Pancreas (tissue), 10 donors: ENCODE measurements at regions of chr17 and their contacts with region 1.

Region 1: GRCh38 chr17:82781894-82782274 is 30.0 kb downstream of the TBCD start:
- DNase-seq: peak; percentile 66 to 92 (median 83)
- ATAC-seq: peak; percentile 96 to 100 (median 98)
- H3K4me3 ChIP-seq: no peak overlapping the region
- H3K27ac ChIP-seq: no peak overlapping the region
- H3K4me1 ChIP-seq: no peaks in the 10 kb centered on the region
- H3K27me3 ChIP-seq: no peaks in the 10 kb centered on the region
- CTCF ChIP-seq: peak; percentile 86 to 96 (median 94)

Region 2: GRCh38 chr17:82917691-82918345 is 135.9 kb after region 1 on chr17:
- intact Hi-C with region 1: loop called in 1 of 3 experiments (anchors 10 kb)
- DNase-seq: peak in 1 of 6 donors; percentile 20
- ATAC-seq: peak in 1 of 4 donors; percentile 44
- H3K4me3 ChIP-seq: no peak overlapping the region
- H3K27ac ChIP-seq: no peak overlapping the region
- H3K4me1 ChIP-seq: peaks cover 0 to 8% (median 3%) of the 10 kb centered on the region in 3 donors
- H3K27me3 ChIP-seq: no peaks in the 10 kb centered on the region
- CTCF ChIP-seq: peak in 2 of 4 donors; percentile 19 to 21

Region 3: DNA sequence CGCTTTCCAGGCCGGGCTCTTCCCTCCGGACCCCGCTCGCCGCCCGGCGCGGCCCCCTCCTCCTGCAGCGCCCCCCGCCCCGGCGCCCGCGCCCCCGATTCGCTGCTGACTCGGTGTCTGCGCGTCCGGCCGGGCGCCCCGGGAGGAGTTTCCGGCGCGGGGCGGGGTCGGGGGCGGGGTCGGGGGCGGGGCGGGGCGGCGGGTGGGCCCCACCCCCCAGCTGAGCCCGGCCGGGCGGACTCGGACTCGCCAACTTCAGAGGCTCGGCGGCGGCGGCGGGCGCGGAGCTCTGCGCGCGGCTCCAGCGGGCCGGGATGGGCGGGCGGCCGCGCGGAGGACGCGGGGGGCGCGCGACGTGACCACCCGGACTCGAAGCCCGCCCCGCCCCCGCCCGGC is 297.5 kb after region 1 on chr17 and contains the start of gene METRNL:
- intact Hi-C with region 1: loop called in 1 of 3 experiments (anchors 5 kb)
- DNase-seq: peak in 5 of 6 donors; percentile 66 to 93 (median 80)
- ATAC-seq: peak; percentile 46 to 78 (median 64)
- H3K4me3 ChIP-seq: peak within 1 kb of the TSS; percentile 66 to 86 (median 75)
- H3K27ac ChIP-seq: peak within 1 kb of the TSS; percentile 48 to 77 (median 62)
- H3K4me1 ChIP-seq: peaks cover 0 to 12% (median 12%) of the 10 kb centered on the region in 3 donors
- H3K27me3 ChIP-seq: no peaks in the 10 kb centered on the region
- CTCF ChIP-seq: no peak
- total RNA-seq, gene METRNL: 11.1 to 28.3 (median 16.2) TPM